ENCODE measurements at regions of chr11 and their contacts with region 1.

Region 1: DNA sequence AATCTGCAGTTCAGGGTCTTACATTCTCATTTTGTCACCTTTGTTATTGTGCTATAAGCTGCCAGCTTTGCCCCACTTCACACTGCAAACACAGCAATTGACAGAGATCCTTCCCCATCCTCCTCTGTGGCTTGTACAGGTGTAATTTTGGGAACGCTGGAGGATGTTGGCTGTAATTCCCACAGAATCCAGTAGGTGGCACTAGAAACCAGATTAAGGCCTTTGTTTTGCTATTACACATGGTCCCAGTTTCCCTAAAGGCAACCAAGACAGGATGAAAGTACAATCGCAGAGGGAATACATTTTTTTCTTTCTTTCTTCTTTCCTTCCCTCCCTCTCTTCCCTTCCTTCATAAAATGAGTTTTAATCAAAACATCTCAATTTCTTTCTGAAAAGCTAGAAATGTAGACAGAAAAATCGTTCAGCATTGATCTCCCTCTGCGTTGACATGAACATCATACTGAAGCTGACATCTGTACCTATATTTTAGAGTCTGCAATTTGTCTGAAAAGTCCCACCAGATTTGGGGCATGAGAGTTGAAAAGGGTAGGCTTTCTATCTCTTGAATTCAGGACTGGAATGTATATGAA is 21.3 kb upstream of the NELL1 start:
- DNase-seq: no peak
- ATAC-seq: peak; percentile 75
- H3K4me3 ChIP-seq: no peak overlapping the region
- H3K27ac ChIP-seq: no peak overlapping the region
- H3K4me1 ChIP-seq: no peaks in the 10 kb centered on the region
- H3K27me3 ChIP-seq: no peaks in the 10 kb centered on the region

Region 2: DNA sequence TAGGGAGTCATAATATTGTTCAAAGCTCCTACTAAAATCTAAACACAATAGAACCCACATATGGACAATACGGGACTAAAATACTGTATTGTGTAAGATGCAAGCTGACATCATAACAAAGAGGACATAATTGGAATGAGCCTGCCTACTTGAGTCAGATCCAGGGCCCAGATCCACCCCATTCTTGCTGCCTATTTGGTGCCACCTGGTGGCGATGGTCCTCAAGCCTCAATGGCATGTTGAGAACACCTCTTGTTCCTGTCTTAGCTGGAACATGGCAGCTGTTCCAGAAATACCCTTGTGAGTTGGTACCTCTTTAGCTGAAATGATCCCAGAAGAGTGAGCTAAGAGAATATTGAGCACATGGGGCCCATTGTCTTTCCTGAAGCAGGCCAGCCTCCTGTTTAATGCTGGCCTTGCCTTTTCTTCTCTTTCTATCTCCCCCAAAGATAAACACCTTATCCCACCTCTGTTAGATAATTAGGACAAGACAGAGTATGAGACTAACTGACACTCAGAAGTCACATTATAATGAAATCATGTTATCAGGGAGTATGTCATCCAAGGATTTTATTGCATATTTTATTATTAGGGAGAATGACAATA is 863.9 kb after region 1 on chr11:
- intact Hi-C with region 1: loop called in 1 of 2 experiments (anchors 5 kb)
- DNase-seq: peak in 1 of 2 donors; percentile 46
- ATAC-seq: no peak
- H3K4me3 ChIP-seq: no peak overlapping the region
- H3K27ac ChIP-seq: no peak overlapping the region
- H3K4me1 ChIP-seq: no peaks in the 10 kb centered on the region
- H3K27me3 ChIP-seq: peaks cover 0 to 2% of the 10 kb centered on the region in 2 donors

Region 3: DNA sequence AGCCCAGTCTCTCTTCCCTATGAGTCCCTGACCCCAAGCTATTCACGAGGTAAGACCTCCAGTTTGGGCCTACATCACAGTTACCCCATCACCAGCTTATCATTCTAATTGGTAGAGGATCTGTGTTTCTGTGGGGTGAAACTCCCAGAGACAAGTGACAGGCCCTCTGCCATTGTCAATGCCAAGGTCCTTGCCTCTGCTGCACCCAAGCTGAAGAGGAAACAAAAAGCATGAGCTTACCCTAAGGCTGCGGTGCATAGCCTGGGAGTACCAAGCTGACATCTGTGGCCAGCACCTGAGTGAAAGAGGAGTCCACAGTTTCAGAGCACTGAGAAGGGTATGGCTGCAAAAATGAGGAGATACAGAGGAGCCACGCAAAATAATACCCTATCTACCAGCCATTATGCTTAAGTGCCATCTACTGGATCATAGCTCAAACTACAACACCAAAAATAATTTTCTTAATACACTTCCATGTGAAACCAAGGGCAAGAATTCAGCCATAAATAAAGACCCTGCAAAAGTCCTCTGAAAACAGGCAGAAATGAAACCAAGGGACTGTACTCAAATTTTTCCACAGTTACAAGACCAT is 1482.5 kb after region 1 on chr11:
- intact Hi-C with region 1: loop called in 1 of 2 experiments (anchors 10 kb)
- DNase-seq: no peak
- ATAC-seq: no peak
- H3K4me3 ChIP-seq: no peak overlapping the region
- H3K27ac ChIP-seq: no peak overlapping the region
- H3K4me1 ChIP-seq: no peaks in the 10 kb centered on the region
- H3K27me3 ChIP-seq: no peaks in the 10 kb centered on the region

Region 4: DNA sequence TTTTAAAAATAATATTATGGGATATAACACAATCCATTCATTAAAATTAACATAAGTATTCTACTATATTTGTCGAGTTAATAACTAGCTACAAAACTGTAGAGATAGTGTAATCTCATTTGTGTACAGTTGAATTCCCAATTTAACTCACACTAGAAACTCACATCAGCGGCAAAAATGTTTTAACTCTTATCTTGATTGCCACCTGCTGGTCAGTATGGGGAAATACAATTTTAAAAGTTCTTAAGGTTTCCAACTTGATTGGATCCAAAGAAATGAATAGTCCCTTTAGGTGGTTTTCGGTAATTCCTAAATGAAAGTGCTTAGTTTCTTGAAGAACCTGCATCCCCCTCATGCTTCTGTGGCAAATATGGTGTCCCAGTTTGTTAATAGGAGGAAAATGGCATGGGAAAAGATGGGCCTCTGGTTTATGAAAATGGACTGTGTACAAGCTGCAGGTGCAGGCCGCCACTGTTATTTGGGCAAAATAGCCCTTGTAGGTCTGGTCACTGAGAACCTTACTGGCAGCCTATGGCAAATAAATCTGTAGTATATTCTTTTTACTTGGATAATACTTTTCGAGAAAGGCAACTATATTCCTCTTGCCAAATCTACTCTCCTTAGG is 1656.4 kb after region 1 on chr11:
- intact Hi-C with region 1: loop called (anchors 10 kb)
- DNase-seq: no peak
- ATAC-seq: no peak
- H3K4me3 ChIP-seq: no peak overlapping the region
- H3K27ac ChIP-seq: no peak overlapping the region
- H3K4me1 ChIP-seq: no peaks in the 10 kb centered on the region
- H3K27me3 ChIP-seq: no peaks in the 10 kb centered on the region

Measured in aorta (tissue), 5 donors.